ENCODE measurements at regions of chr17 and their contacts with region 1.

Region 1: GRCh38 chr17:78133971-78134898 is 3.7 kb downstream of the TMC8 start:
- DNase-seq: peak; percentile 90
- H3K4me3 Mint-ChIP-seq: peak overlapping the region; percentile 60
- H3K27ac Mint-ChIP-seq: peak overlapping the region; percentile 7
- H3K4me1 Mint-ChIP-seq: peaks cover 62% of the 10 kb centered on the region
- H3K27me3 Mint-ChIP-seq: no peaks in the 10 kb centered on the region

Region 2: DNA sequence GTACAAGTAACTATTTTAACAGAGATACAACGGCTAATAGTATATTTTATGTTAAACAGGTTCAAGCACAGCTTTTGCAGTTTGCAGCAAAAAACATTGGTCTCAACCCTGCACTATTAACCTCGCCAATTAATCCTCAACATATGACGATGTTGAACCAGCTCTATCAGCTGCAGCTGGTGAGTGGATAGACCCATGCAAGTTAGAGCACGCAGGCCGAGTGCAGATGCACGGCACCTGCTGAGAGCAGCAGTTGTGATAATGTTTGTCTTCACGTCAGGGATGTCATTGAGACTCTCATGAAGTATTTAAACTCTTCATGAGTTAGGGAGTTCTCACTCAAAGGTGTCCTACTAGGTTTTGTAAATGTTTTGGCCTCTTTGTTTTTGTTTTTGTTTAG is 51.2 kb before region 1 on chr17:
- CTCF ChIA-PET with region 1: interaction called, 16 read pairs
- intact Hi-C with region 1: loop called (anchors 1 kb)
- DNase-seq: no peak
- H3K4me3 Mint-ChIP-seq: no peak overlapping the region
- H3K27ac Mint-ChIP-seq: no peak overlapping the region
- H3K4me1 Mint-ChIP-seq: no peaks in the 10 kb centered on the region
- H3K27me3 Mint-ChIP-seq: no peaks in the 10 kb centered on the region

Region 3: GRCh38 chr17:78112518-78113226 is 21.6 kb before region 1 on chr17:
- CTCF ChIA-PET with region 1: interaction called, 100 read pairs
- intact Hi-C with region 1: loop called (anchors 1 kb)
- DNase-seq: peak; percentile 84
- H3K4me3 Mint-ChIP-seq: no peak overlapping the region
- H3K27ac Mint-ChIP-seq: peak overlapping the region; percentile 88
- H3K4me1 Mint-ChIP-seq: peaks cover 37% of the 10 kb centered on the region
- H3K27me3 Mint-ChIP-seq: no peaks in the 10 kb centered on the region

Region 4: GRCh38 chr17:78774956-78775571 is 640.8 kb after region 1 on chr17:
- CTCF ChIA-PET with region 1: no interaction called
- intact Hi-C with region 1: loop called (anchors 10 kb)
- DNase-seq: peak; percentile 86
- H3K4me3 Mint-ChIP-seq: peak overlapping the region; percentile 82
- H3K27ac Mint-ChIP-seq: peak overlapping the region; percentile 97
- H3K4me1 Mint-ChIP-seq: peaks cover 65% of the 10 kb centered on the region
- H3K27me3 Mint-ChIP-seq: no peaks in the 10 kb centered on the region

Measured in activated naive CD4-positive, alpha-beta T cell treated with anti-CD3 and anti-CD28 coated beads for 36 hours (primary cell).